PC-3 (cell line): ENCODE measurements at regions of chr19 and their contacts with region 1.

Region 1: GRCh38 chr19:45092747-45093678 is at the start of gene PPP1R37:
- DNase-seq: peak; percentile 94
- ATAC-seq: peak; percentile 56
- H3K4me3 ChIP-seq: peak within 1 kb of the TSS; percentile 91
- H3K27ac ChIP-seq: peak within 1 kb of the TSS; percentile 82
- H3K4me1 ChIP-seq: peaks cover 20% of the 10 kb centered on the region
- H3K27me3 ChIP-seq: no peaks in the 10 kb centered on the region
- CTCF ChIP-seq: 0 out of 2 replicates have a peak, but pooled peaks have one; percentile 17
- total RNA-seq, gene PPP1R37: 37.0 and 46.4 TPM in 2 replicates

Region 2: DNA sequence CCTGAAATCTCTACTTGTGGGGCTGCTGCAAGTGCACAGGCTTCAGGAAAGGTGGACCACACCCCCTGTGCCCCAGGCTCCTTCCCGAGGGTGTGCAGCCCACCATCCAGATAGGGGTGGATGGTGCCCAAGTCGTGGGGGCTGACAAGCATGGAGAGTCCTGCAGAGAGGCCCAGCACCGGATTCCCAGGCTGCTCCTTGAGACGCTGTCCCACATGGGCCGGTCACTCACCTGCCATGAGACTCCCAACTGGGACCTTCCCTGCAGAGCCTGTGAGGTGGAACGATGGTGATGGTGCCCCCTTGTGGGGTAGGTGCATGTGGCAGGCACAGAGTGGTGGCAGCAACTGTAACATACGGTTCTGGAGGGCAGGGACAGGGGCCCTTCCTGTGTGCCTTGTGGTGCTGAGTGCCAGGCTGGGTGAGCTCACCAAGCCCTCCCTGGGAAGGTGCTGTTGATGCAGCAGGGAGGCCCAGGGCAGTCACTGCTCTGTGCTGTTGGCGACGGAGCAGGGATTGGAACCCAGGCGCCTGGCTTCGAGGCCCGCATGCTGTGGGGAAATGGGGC is 33.0 kb after region 1 on chr19:
- CTCF ChIA-PET with region 1: interaction called, 4 read pairs
- POLR2A ChIA-PET with region 1: no interaction called
- intact Hi-C with region 1: loop called (anchors 5 kb)
- DNase-seq: peak; percentile 72
- ATAC-seq: peak; percentile 73
- H3K4me3 ChIP-seq: no peak overlapping the region
- H3K27ac ChIP-seq: no peak overlapping the region
- H3K4me1 ChIP-seq: peaks cover 16% of the 10 kb centered on the region
- H3K27me3 ChIP-seq: no peaks in the 10 kb centered on the region
- CTCF ChIP-seq: peak; percentile 76

Region 3: DNA sequence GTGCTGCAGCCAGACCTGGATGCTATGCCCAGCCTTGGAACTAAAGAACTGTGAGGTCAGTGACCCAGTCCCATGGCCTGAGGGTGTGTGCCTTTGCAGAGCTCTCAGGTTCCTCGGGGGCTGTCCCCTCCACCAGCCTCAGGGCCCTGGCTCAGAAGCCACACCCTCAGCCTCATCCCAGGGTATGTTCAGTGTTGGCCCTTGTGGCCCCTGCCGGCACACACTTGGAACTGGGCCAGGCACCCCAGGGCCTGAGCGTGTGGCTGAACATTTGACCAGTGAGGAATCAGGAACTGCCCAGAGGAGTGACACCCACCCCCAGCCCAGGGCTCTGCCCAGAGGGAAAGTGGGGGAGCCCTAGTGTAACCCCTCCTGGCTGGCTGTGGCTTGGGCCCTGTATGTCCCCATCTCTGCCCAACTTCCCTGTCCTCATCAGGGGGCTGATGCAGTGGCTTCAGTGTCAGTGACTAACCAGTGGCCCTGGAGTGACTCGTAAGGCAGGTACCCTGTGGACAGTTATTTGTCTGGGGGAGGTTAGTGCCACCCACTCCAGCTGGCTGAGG is 57.8 kb after region 1 on chr19:
- CTCF ChIA-PET with region 1: interaction called, 10 read pairs
- POLR2A ChIA-PET with region 1: no interaction called
- intact Hi-C with region 1: no loop called
- DNase-seq: peak; percentile 14
- ATAC-seq: 0 out of 2 replicates have a peak, but pooled peaks have one; percentile 10
- H3K4me3 ChIP-seq: no peak overlapping the region
- H3K27ac ChIP-seq: no peak overlapping the region
- H3K4me1 ChIP-seq: peaks cover 9% of the 10 kb centered on the region; the same call in 1 of the 2 replicates
- H3K27me3 ChIP-seq: no peaks in the 10 kb centered on the region
- CTCF ChIP-seq: no peak

Region 4: DNA sequence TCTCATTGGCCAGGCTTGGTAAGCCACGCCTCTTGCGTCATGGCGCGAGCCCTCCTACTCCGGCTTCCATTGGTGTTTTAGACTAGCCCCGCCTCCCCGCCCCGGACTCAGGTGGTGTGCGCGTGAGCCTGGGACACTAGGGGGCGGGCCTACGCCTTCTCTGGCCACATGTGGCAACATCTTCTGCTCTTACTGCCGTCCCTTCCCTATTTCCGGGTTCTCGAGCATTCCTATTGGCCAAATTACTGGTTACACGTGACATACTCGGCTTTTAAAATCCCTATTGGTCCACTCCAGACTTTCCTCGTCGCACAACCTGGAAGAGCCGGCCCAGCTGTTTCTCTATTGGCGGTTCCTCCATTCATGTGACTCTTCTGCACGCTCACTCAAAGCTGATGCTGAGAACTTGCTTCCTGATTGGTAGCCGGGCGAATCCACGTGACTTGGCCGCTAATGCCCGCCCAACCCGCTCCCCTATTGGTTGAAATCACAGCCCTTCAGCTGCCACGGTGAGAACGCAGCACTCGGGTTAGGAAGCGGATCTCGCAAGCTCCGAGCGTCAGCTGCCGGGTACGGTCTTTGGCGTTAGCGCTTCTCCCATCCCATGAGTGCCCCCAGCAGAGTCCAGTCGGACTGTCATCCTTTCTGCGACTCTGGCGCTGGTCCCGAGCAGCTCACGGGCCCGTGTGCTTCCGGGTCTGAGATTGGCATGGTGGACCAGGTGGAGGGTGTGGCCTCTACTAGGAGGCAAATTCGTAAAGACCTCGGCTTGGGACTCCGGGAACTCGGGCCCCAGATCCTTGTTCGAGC is 85.5 kb after region 1 on chr19 and contains the start of gene BLOC1S3:
- CTCF ChIA-PET with region 1: no interaction called
- POLR2A ChIA-PET with region 1: no interaction called
- intact Hi-C with region 1: loop called (anchors 5 kb)
- DNase-seq: peak; percentile 97
- ATAC-seq: peak; percentile 82
- H3K4me3 ChIP-seq: peak within 1 kb of the TSS; percentile 98
- H3K27ac ChIP-seq: peak within 1 kb of the TSS; percentile 82
- H3K4me1 ChIP-seq: peaks cover 11% of the 10 kb centered on the region
- H3K27me3 ChIP-seq: no peaks in the 10 kb centered on the region
- CTCF ChIP-seq: no peak; the same call in 1 of the 2 replicates
- total RNA-seq, gene BLOC1S3: 7.3 and 11.9 TPM in 2 replicates

Region 5: DNA sequence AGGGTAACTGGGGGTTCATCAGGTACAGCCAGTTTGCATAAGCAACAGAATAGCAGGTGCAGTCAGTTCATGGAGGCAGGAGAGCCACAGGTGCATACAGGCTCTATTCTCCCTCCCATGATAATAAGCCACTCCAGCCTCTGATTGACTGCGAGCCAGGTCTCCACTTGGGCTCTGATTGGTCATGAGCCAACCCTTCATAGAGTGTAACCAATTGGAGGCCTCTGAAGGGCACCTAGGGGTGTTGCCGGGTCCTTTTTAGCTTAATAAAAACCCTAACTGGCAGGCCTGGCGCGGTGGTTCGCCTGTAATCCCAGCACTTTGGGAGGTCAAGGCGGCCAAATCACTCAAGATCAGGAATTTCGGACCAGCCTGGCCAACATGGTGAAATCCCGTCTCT is 238.4 kb after region 1 on chr19:
- CTCF ChIA-PET with region 1: no interaction called
- POLR2A ChIA-PET with region 1: no interaction called
- intact Hi-C with region 1: loop called (anchors 10 kb)
- DNase-seq: no peak
- ATAC-seq: no peak
- H3K4me3 ChIP-seq: no peak overlapping the region
- H3K27ac ChIP-seq: no peak overlapping the region
- H3K4me1 ChIP-seq: no peaks in the 10 kb centered on the region
- H3K27me3 ChIP-seq: no peaks in the 10 kb centered on the region
- CTCF ChIP-seq: no peak